Ascending aorta (tissue), 2 donors: ENCODE measurements at regions of chr16 and their contacts with region 1.

Region 1: DNA sequence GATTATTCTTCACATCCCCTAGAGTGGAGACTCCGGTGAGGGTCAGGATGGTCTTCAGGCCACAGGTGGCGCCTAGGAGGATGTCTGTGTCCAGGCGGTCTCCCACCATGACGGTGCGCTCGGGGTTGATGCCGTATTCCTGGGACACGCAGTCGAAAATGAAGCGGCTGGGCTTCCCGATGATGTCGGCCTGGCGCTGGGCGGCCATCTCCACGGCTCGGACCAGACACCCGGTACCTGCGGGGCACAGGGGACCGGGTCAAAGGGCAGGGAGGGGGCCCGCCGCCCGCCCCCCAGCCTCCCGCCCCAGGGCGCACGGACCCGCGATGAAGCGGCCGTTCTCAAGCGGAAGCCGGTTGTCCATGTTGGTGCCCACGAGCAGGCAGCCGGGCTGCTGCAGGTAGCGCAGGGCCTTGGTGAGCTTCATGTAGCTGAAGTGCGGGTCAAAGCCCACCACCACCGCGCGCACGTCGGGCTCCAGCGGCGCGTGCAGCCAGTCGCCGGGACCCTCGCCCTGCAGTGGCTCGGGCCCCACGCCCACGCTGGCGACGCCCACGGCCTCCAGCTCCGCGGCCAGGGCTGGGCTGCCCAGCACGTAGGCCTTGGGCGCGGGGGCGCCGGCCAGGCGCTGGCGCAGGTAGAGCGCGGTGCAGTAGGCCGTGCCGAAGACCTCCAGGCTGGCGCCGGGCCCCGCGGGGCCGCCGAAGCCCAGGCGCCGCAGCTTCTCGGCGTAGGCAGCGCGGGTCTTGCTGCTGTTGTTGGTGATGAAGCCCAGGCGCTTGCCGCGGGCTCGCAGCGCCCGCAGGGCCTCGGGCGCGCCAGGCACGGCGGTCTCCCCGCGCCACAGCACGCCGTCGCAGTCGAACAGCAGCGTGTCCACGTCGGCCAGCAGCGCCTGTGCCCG is 571 bp downstream of the PGP start:
- DNase-seq: no peak
- H3K4me3 ChIP-seq: peak overlapping the region; percentile 93 to 99
- H3K27ac ChIP-seq: peak overlapping the region; percentile 51 to 73
- H3K4me1 ChIP-seq: peaks cover 12 to 22% of the 10 kb centered on the region in 2 donors
- H3K27me3 ChIP-seq: no peaks in the 10 kb centered on the region
- CTCF ChIP-seq: no peak

Region 2: DNA sequence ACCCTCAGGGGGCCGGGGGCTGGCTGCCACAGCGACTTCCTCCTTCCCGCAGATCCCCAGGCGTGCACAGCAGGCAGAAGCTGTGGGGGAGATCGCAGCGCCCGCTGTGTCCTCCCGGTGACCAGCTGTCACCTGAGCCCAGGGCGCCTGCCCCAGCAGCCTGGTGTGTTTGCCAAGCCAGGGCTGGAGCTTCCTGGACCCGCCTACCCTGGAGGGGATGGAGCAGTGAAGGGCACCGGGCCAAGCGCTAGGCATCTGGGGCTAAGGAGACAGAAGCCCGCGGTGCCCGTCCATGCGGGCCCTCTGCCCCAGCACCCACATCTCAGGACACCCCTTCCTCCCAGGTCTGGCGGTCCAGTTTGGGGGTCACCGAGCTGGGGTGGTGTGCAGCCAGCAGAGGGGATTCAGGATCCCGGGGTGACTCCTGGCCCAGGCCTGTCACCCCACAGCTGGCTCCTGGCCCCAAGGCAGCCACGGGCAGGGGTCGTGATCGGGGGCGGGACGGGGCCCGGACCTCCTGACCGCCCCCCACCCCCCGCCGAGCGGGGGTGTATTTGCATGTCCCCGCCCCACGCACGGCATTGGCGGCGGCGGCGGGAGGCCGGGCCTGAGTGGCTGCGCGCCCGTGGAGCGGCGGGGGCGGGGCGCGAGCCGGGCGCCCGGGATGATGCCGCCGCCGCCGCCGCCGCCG is 65.9 kb before region 1 on chr16 and contains the start of gene RAB26:
- intact Hi-C with region 1: no loop called
- DNase-seq: peak in 1 of 2 donors; percentile 87
- H3K4me3 ChIP-seq: peak within 1 kb of the TSS; percentile 53 to 77
- H3K27ac ChIP-seq: peak within 1 kb of the TSS in 1 of 2 donors; percentile 55
- H3K4me1 ChIP-seq: peaks cover 12 to 38% of the 10 kb centered on the region in 2 donors
- H3K27me3 ChIP-seq: no peaks in the 10 kb centered on the region
- CTCF ChIP-seq: no peak
- total RNA-seq, gene RAB26: not detected

Region 3: GRCh38 chr16:2251483-2252240 is 37.6 kb after region 1 on chr16 and contains the start of gene ECI1:
- intact Hi-C with region 1: loop called (anchors 5 kb)
- DNase-seq: peak; percentile 74 to 98
- H3K4me3 ChIP-seq: peak within 1 kb of the TSS; percentile 80 to 86
- H3K27ac ChIP-seq: peak within 1 kb of the TSS; percentile 82 to 88
- H3K4me1 ChIP-seq: peaks cover 10 to 11% of the 10 kb centered on the region in 2 donors
- H3K27me3 ChIP-seq: no peaks in the 10 kb centered on the region
- CTCF ChIP-seq: peak; percentile 73 to 76 (median 74)
- total RNA-seq, gene ECI1: 10.9 TPM